ENCODE measurements at regions of chrX and their contacts with region 1.

Region 1: DNA sequence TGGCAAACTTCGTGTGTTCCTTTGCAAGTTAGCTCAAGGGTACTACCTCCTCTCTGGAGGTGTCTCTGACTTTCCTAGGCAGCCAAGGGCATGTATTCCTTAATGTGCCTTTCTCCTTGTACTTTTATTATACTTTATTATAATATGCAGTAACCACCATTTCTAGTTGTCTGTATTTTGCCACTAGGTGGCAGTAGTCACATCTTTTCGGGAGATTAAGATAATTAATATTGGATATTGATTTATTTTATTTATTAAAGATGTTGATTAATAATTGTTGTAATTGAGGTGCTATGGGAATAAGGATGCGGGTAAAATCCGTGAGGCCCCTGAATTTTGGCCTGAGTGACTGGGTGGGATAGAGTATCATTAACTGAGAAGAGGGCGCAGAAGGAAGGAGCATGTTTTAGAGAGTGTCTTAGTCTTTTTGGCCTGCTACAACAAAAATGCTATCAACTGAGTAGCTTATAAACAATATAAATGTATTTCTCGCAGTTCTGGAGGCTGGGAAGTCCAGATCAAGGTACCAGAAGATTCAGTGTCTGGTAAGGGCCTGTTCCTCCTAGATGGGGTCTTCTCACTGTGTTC is 153.3 kb downstream of the TMEM164 start:
- DNase-seq: peak; percentile 57
- H3K4me3 Mint-ChIP-seq: no peak overlapping the region
- H3K27ac Mint-ChIP-seq: no peak overlapping the region
- H3K4me1 Mint-ChIP-seq: peaks cover 12% of the 10 kb centered on the region
- H3K27me3 Mint-ChIP-seq: no peaks in the 10 kb centered on the region

Region 2: GRCh38 chrX:110201799-110202198 is 45.5 kb after region 1 on chrX:
- intact Hi-C with region 1: no loop called
- DNase-seq: no peak
- H3K4me3 Mint-ChIP-seq: no peak overlapping the region
- H3K27ac Mint-ChIP-seq: no peak overlapping the region
- H3K4me1 Mint-ChIP-seq: peaks cover 6% of the 10 kb centered on the region
- H3K27me3 Mint-ChIP-seq: no peaks in the 10 kb centered on the region

Region 3: DNA sequence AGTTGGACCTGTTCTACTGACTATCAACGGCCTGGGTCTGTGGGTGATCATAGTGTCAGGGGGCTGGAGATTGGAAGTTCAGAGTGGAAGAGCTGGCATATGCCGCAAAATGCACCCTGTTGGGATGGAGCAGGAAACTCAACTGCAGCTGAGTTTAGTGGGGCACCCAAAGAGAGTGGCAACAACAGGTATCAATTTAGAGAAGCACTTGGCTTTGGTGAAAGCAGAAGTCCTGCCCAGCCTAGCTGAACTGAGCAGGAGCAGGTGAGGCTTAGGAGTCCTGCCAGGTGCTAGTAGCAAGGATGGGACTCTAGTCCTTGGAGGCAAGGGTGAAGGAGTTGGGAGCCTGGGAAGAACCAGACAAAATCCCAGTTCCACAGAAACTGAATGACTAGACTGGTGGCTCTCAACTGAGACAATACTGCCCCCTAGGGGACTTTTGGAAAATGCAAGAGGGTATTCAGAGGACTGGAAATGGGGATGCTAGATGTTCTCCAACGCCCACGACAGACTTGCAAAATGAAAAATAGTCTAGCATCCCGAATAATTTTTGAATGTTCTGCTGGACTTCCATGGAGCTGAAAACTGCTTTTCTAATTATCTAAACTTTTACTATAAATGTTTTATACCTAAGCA is 251.8 kb after region 1 on chrX:
- intact Hi-C with region 1: loop called (anchors 1 kb)
- DNase-seq: peak; percentile 85
- H3K4me3 Mint-ChIP-seq: no peak overlapping the region
- H3K27ac Mint-ChIP-seq: no peak overlapping the region
- H3K4me1 Mint-ChIP-seq: peaks cover 5% of the 10 kb centered on the region
- H3K27me3 Mint-ChIP-seq: peaks cover under 1% of the 10 kb centered on the region

Region 4: GRCh38 chrX:110412971-110413721 is 256.9 kb after region 1 on chrX:
- intact Hi-C with region 1: loop called (anchors 1 kb)
- DNase-seq: peak; percentile 88
- H3K4me3 Mint-ChIP-seq: no peak overlapping the region
- H3K27ac Mint-ChIP-seq: no peak overlapping the region
- H3K4me1 Mint-ChIP-seq: peaks cover 6% of the 10 kb centered on the region
- H3K27me3 Mint-ChIP-seq: peaks cover 2% of the 10 kb centered on the region